ENCODE measurements at regions of chr1 and their contacts with region 1.

Region 1: DNA sequence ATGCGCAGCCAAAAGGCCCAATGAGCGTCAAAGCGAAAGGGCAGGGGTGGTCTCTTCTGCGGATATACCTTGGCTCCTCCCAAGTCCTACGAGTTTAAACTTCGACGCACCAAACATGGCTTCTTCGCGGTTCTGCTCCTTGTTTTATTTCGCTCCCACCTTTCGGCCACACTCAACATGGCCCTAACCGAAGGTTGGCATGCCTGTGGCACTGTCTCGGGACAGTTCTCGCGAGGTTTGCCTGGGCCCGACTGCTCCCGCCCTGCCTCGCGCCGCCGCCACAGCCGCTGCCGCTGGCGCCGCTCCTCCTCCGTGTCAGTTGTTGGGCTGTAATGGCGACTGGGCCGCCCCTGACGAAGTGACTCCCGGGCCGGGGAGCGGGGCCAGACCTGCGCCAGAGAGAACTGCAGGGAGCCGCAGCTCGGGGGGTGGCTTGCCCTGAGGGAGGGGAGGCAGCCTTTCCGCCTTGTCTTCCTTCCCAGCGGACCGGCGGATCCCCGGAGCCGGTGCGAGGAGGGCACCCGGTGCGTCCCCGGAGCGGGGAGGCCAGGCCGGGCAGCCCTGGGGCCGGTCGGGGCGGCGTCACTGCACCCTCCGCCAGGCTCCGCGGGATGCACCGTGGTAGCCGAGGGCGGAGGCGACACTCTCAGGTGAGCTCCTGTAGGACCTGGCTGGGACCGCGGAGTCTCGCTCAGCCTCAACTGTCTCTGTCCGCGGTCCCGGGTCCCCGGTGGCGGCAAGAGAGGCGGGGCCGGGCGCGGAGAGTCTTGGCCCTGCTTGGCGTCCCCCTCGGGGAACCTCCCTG is at the start of gene CEP350:
- DNase-seq: peak; percentile 90
- CTCF ChIP-seq: no peak

Region 2: DNA sequence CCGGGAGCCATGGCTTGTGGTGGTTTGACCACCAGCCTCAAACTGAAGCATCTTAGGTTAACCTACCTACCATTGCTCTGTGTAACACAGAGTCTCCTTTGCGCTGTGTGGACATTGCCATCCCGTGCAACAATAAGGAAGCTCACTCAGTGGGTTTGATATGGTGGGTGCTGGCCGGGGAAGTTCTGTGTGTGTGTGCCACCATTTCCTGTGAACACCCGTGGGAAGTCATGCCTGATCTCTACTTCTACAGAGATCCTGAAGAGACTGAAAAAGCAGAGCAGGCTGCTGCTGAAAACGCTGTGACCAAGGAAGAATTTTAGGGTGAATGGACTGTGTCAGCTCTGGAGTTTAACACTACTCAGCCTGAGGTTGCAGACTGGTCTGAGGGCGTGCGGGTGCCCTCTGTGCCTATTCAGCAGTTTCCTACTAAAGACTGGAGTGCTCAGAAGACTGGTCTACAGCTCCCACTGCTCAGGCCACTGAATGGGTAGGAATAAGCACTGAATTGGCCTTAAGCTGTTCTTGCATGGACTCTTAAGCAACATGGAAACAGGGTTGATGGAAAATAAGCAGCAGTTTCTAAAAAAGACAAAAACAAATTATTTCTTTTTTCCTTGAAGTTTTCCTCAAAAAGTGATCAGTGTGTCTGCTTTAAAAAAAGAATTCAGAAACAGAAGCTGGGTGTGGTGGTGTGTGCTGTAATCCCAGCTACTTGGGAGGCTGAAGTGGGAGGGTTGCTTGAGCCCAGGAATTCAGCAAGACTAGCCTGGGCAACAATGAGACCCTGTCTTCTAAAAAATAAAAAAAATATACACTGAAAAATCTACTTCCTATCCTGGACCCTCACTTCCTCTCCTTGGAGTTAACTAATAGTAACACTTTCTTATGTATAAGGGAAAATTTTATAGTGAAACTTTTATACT is 14.6 kb after region 1 on chr1:
- CTCF ChIA-PET with region 1: interaction called, 12 read pairs
- POLR2A ChIA-PET with region 1: interaction called, 3 read pairs
- DNase-seq: no peak
- CTCF ChIP-seq: no peak

Region 3: DNA sequence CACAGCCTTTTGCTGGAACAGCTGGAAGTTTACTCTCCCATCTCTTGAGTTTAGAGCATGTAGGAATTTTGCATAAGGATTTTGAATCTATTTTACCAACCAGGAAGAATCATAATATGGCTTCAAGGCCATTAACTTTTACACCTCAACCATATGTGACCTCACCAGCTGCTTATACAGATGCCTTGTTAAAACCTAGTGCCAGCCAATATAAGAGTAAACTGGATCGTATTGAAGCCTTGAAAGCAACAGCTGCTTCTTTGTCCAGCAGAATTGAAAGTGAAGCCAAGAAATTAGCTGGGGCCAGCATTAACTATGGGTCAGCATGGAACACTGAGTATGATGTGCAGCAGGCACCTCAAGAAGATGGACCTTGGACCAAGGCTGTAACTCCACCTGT is 65.3 kb after region 1 on chr1:
- CTCF ChIA-PET with region 1: no interaction called
- POLR2A ChIA-PET with region 1: no interaction called
- DNase-seq: no peak
- CTCF ChIP-seq: no peak